AG04450 (cell line): ENCODE measurements at regions of chr5 and their contacts with region 1.

Region 1: GRCh38 chr5:154916884-154917283 is 21.1 kb downstream of the GEMIN5 start:
- DNase-seq: no peak
- H3K4me3 ChIP-seq: no peak overlapping the region
- H3K27ac ChIP-seq: no peak overlapping the region
- H3K27me3 ChIP-seq: no peaks in the 10 kb centered on the region
- CTCF ChIP-seq: no peak

Region 2: GRCh38 chr5:154593071-154593470 is 323.8 kb before region 1 on chr5:
- CTCF ChIA-PET with region 1: no interaction called
- POLR2A ChIA-PET with region 1: no interaction called
- DNase-seq: no peak
- H3K4me3 ChIP-seq: no peak overlapping the region
- H3K27ac ChIP-seq: no peak overlapping the region
- H3K27me3 ChIP-seq: peaks cover 6% of the 10 kb centered on the region
- CTCF ChIP-seq: no peak

Region 3: GRCh38 chr5:155049569-155050383 is 132.9 kb after region 1 on chr5:
- CTCF ChIA-PET with region 1: interaction called, 11 read pairs
- POLR2A ChIA-PET with region 1: no interaction called
- DNase-seq: no peak
- H3K4me3 ChIP-seq: no peak overlapping the region
- H3K27ac ChIP-seq: no peak overlapping the region
- H3K27me3 ChIP-seq: no peaks in the 10 kb centered on the region
- CTCF ChIP-seq: peak; percentile 46

Region 4: DNA sequence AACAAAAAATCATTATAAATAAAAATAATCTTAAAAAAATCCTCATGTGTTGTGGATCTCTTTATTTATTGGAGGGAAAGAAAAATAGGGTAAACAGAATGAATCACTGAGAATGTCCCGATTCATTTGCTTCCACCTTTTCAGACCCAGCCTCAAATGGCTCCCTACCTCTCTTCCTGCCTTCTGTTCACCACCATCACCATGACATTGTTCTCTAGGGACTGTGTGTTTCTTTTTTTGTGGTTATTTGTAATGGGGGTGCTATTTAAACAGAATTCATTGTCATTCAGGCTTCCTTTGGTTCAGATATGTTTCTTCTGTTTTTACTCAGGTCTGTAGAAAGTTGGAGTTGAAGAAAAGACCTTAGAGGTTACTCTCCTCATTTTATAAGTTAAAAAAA is 294.9 kb after region 1 on chr5:
- CTCF ChIA-PET with region 1: no interaction called
- POLR2A ChIA-PET with region 1: no interaction called
- DNase-seq: no peak
- H3K4me3 ChIP-seq: no peak overlapping the region
- H3K27ac ChIP-seq: no peak overlapping the region
- H3K27me3 ChIP-seq: no peaks in the 10 kb centered on the region
- CTCF ChIP-seq: no peak